Activated CD4-positive, alpha-beta T cell treated with anti-CD3 and anti-CD28 coated beads for 36 hours (primary cell): ENCODE measurements at regions of chrX and their contacts with region 1.

Region 1: GRCh38 chrX:26783512-26784225 is 567.7 kb downstream of the MAGEB5 start:
- DNase-seq: peak; percentile 9
- ATAC-seq: no peak
- H3K4me3 Mint-ChIP-seq: no peak overlapping the region
- H3K27ac Mint-ChIP-seq: no peak overlapping the region
- H3K4me1 Mint-ChIP-seq: no peaks in the 10 kb centered on the region
- H3K27me3 Mint-ChIP-seq: no peaks in the 10 kb centered on the region

Region 2: GRCh38 chrX:26376037-26376708 is 407.5 kb before region 1 on chrX:
- CTCF ChIA-PET with region 1: no interaction called
- POLR2A ChIA-PET with region 1: no interaction called
- intact Hi-C with region 1: no loop called
- DNase-seq: no peak
- ATAC-seq: no peak
- H3K4me3 Mint-ChIP-seq: no peak overlapping the region
- H3K27ac Mint-ChIP-seq: no peak overlapping the region
- H3K4me1 Mint-ChIP-seq: no peaks in the 10 kb centered on the region
- H3K27me3 Mint-ChIP-seq: no peaks in the 10 kb centered on the region

Region 3: GRCh38 chrX:26918633-26919032 is 135.0 kb after region 1 on chrX:
- CTCF ChIA-PET with region 1: no interaction called
- POLR2A ChIA-PET with region 1: no interaction called
- intact Hi-C with region 1: loop called (anchors 2 to 5 kb)
- DNase-seq: no peak
- ATAC-seq: no peak
- H3K4me3 Mint-ChIP-seq: no peak overlapping the region
- H3K27ac Mint-ChIP-seq: no peak overlapping the region
- H3K4me1 Mint-ChIP-seq: no peaks in the 10 kb centered on the region
- H3K27me3 Mint-ChIP-seq: no peaks in the 10 kb centered on the region

Region 4: DNA sequence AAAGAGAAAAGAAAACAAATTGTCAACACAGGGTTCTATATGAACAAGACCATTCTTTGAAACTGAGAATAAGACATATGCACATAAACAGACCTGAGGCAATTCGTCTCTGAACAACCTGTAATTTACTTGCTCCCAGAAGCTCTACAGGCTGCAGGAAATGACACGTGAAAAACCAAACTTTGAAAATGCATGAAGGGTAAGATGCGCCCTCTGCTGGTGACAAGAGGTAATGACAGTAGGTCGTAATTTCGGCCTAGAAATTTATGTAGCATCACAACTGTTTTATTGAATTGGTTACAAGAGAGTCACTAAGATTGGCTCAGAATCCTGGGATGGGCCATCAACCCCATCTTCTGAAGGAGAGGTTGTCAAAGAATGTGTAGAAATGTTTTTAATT is 403.0 kb after region 1 on chrX:
- CTCF ChIA-PET with region 1: interaction called, 3 read pairs
- POLR2A ChIA-PET with region 1: no interaction called
- intact Hi-C with region 1: loop called (anchors 1 to 5 kb)
- DNase-seq: peak; percentile 40
- ATAC-seq: no peak
- H3K4me3 Mint-ChIP-seq: no peak overlapping the region
- H3K27ac Mint-ChIP-seq: no peak overlapping the region
- H3K4me1 Mint-ChIP-seq: no peaks in the 10 kb centered on the region
- H3K27me3 Mint-ChIP-seq: no peaks in the 10 kb centered on the region

Region 5: GRCh38 chrX:27336466-27337091 is 552.9 kb after region 1 on chrX:
- CTCF ChIA-PET with region 1: no interaction called
- POLR2A ChIA-PET with region 1: no interaction called
- intact Hi-C with region 1: loop called in 1 of 2 experiments (anchors 10 kb)
- DNase-seq: peak; percentile 55
- ATAC-seq: no peak
- H3K4me3 Mint-ChIP-seq: no peak overlapping the region
- H3K27ac Mint-ChIP-seq: no peak overlapping the region
- H3K4me1 Mint-ChIP-seq: no peaks in the 10 kb centered on the region
- H3K27me3 Mint-ChIP-seq: no peaks in the 10 kb centered on the region

Region 6: GRCh38 chrX:27680726-27681125 is 897.1 kb after region 1 on chrX:
- CTCF ChIA-PET with region 1: no interaction called
- POLR2A ChIA-PET with region 1: no interaction called
- intact Hi-C with region 1: loop called in 1 of 2 experiments (anchors 10 kb)
- DNase-seq: no peak
- ATAC-seq: no peak
- H3K4me3 Mint-ChIP-seq: no peak overlapping the region
- H3K27ac Mint-ChIP-seq: no peak overlapping the region
- H3K4me1 Mint-ChIP-seq: no peaks in the 10 kb centered on the region
- H3K27me3 Mint-ChIP-seq: no peaks in the 10 kb centered on the region

Region 7: DNA sequence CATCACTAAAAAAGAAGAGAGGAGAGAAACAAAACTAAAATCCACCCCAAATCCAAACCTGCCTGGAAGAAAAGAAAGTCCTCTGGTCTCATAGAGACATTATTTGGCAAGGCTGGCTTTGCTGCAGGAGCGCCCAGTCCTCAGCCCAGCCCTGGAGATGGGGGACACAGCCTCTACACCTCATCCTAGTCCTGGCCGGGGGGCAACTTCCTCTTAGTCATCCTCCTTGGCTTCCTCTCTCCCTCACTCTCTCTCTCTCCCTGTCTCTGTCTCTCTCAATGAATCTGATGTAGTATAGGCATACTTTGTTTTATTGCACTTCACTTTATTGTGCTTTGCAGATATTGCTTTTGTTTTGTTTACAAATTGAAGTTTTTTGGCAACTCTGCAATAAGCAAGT is 968.3 kb after region 1 on chrX:
- CTCF ChIA-PET with region 1: no interaction called
- POLR2A ChIA-PET with region 1: no interaction called
- intact Hi-C with region 1: no loop called
- DNase-seq: no peak
- ATAC-seq: no peak
- H3K4me3 Mint-ChIP-seq: no peak overlapping the region
- H3K27ac Mint-ChIP-seq: no peak overlapping the region
- H3K4me1 Mint-ChIP-seq: no peaks in the 10 kb centered on the region
- H3K27me3 Mint-ChIP-seq: no peaks in the 10 kb centered on the region